Activated T-helper 1 cell treated with anti-CD3 and anti-CD28 coated beads, Interleukin-12 subunit alpha, Interleukin-12 subunit beta, Interleukin-2, Interleukin-4 antibody, amounts not matched to agents 30 ng/mL and 10 ng/mL and 1 ng/mL, durations not matched to agents 14 hours and 24 hours and 36 hours (primary cell): ENCODE measurements at regions of chr1 and their contacts with region 1.

Region 1: DNA sequence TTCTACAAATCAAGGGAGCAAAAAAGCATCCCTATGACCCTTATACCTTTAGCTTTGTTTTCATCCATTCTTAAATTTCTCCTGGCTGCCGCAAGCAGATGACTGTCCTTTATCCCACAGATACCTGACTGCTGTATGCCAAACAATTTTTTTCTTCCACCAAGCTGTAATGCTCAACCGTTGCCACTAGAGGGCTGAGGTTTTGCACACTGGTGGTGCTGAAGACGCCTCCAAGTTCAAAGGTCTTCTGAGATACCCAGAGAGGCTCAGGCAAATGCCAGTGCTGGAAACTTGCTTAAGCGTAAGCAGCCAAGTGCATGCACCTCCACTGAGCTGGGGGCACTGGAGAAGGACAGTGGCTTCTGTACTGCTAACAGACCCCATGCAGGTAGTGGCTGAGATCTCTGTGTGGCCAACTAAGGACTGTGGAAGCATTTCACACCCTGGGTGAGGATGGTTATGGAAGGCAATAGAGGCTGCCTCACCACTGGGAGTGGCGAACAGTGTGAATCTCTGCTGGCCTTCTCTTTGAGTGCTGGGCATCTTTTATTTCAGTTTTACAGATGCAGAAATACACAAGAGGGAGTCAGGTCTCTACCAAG is 28.5 kb downstream of the CNIH3 start:
- DNase-seq: peak; percentile 48
- H3K4me3 Mint-ChIP-seq: no peak overlapping the region
- H3K27ac Mint-ChIP-seq: no peak overlapping the region
- H3K4me1 Mint-ChIP-seq: no peaks in the 10 kb centered on the region
- H3K27me3 Mint-ChIP-seq: peaks cover 7% of the 10 kb centered on the region

Region 2: DNA sequence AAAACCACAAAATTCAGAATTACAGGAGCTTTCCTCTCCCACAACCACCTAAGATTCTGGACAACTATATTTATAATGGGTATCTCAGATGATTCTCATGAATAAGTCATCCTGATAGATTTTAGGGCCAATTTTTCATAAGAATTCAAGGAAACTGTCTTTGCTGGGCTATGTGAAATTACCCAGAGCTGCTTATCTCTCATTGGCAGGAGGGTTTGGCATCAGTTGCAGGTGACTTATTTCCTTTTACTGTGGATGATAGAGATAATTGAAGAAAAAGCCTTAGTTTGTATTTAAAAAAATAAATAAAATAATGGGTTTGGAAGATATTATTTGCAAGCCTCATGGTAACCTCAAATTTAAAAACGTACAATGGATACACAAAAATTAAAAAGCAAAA is 171.8 kb before region 1 on chr1:
- intact Hi-C with region 1: no loop called
- DNase-seq: no peak
- H3K4me3 Mint-ChIP-seq: no peak overlapping the region
- H3K27ac Mint-ChIP-seq: no peak overlapping the region
- H3K4me1 Mint-ChIP-seq: no peaks in the 10 kb centered on the region
- H3K27me3 Mint-ChIP-seq: peaks cover 8% of the 10 kb centered on the region

Region 3: GRCh38 chr1:224922404-224923164 is 277.9 kb after region 1 on chr1:
- intact Hi-C with region 1: loop called (anchors 1 kb)
- DNase-seq: no peak
- H3K4me3 Mint-ChIP-seq: no peak overlapping the region
- H3K27ac Mint-ChIP-seq: no peak overlapping the region
- H3K4me1 Mint-ChIP-seq: no peaks in the 10 kb centered on the region
- H3K27me3 Mint-ChIP-seq: peaks cover 4% of the 10 kb centered on the region